ENCODE measurements at regions of chr1 and their contacts with region 1.

Region 1: DNA sequence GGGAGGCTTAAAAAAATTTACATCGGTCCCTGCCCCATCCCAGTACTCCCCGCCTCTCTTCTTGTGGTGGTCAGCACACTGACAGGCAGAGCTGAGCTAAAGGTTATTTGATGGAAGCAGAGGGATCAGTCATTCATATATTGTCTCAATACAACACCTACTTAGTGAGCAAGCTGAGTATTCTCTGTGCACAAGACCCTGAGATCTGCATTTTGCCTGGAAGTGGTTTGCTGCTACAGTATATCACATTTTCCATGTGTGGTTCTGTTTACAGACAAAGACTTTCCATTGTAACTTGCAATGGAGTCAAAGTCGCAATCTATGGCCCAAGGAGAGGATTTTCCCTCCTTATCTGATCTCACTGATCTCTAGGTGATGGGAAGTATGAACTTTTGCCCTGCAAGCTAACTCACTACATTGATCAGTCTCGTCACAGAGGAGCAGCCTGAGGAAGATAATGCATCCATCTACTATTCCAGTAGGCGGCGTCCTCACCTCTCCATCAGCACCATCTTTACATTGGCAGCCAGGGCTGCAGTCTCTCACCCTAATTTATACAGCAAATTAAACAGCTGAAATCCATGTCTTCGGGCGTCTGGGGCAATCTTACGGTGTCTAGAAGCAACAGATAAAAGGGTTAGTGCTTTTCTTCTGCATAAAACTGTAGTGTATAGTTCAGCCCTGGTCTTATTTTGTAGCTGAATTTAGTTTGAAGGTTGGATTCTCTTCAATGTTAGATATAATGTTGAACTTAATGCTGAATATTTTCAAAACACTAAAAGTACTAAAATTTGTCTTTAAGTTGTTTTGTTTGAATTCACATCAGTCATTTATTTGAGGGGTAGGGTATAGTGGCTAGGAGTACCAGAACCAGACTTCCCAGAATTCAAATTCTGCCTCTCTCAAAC is 3.2 kb upstream of the TRAF5 start:
- DNase-seq: peak; percentile 68
- H3K4me3 ChIP-seq: no peak overlapping the region
- H3K27ac ChIP-seq: no peak overlapping the region
- H3K4me1 ChIP-seq: peaks cover 3% of the 10 kb centered on the region
- H3K27me3 ChIP-seq: no peaks in the 10 kb centered on the region
- CTCF ChIP-seq: peak; percentile 79 to 80
- POLR2A ChIP-seq: no peak

Region 2: DNA sequence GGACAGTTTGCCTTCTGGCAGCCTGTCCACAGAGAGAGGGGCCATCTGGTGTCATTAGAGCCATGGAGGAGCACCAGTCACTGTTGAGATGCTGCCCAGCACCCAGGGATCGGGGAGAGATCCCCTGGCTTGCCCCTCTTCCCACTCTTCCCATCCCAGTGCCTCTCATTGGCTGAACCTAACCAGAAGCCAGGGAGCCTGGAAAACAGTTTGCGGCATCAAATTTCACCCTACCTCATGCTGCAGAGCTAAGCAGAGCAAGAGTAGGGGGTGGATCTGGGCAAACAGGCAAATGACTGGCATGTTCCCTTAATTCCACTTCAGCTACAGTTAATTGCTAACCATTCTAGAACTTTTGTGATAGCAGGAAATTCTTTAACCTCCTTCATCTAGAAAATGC is 22.3 kb after region 1 on chr1:
- CTCF ChIA-PET with region 1: interaction called, 14 read pairs
- POLR2A ChIA-PET with region 1: no interaction called
- dilution Hi-C with region 1: no loop called
- intact Hi-C with region 1: no loop called
- DNase-seq: no peak
- H3K4me3 ChIP-seq: no peak overlapping the region
- H3K27ac ChIP-seq: no peak overlapping the region
- H3K4me1 ChIP-seq: no peaks in the 10 kb centered on the region
- H3K27me3 ChIP-seq: no peaks in the 10 kb centered on the region
- CTCF ChIP-seq: no peak
- POLR2A ChIP-seq: no peak

Region 3: GRCh38 chr1:211352985-211353515 is 29.6 kb after region 1 on chr1:
- CTCF ChIA-PET with region 1: interaction called, 14 read pairs
- POLR2A ChIA-PET with region 1: no interaction called
- dilution Hi-C with region 1: no loop called
- intact Hi-C with region 1: loop called (anchors 1 kb)
- DNase-seq: no peak
- H3K4me3 ChIP-seq: no peak overlapping the region
- H3K27ac ChIP-seq: no peak overlapping the region
- H3K4me1 ChIP-seq: no peaks in the 10 kb centered on the region
- H3K27me3 ChIP-seq: no peaks in the 10 kb centered on the region
- CTCF ChIP-seq: peak; percentile 75 to 81
- POLR2A ChIP-seq: no peak

Region 4: DNA sequence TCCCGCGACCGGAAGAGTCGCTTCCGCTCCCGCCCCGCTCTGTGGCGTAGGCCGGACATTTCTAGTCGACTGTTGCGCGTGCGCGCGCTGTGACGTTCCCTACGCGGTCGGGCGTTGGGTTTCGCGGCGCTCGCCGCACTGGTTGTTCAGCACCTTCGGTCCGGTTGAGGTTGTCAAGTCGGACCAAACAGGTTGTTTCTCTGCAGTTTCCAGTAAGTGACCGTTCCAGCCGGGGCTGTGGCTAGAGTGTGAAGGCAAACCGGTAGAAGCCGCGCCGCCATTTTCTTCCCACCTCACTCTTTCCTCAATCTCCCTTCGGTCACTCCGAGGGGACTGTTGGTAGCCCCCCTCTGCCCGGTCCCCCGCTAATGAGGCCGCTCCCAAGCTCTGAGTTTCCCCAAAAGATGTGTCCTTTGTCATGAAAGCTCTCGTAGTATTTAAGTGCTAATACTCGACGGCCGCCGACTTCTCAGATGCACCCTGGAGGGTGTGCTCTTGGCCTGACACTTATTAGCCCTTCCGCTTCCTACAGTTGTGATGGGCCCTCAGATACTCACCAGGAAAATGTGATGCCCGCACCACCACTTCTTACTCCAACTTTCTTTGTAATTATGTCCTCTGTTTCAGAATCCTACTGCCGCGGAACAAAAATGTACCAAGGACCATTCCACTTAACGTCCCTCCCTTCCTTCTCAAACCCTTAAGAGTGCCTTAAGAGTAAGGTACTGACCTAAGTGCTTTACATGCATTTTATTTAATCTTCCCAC is 59.5 kb after region 1 on chr1:
- CTCF ChIA-PET with region 1: interaction called, 4 read pairs
- POLR2A ChIA-PET with region 1: no interaction called
- dilution Hi-C with region 1: no loop called
- intact Hi-C with region 1: loop called (anchors 1 kb)
- DNase-seq: peak; percentile 94
- H3K4me3 ChIP-seq: peak overlapping the region; percentile 50 to 77 (median 56)
- H3K27ac ChIP-seq: peak overlapping the region; percentile 96
- H3K4me1 ChIP-seq: peaks cover 11% of the 10 kb centered on the region
- H3K27me3 ChIP-seq: no peaks in the 10 kb centered on the region
- CTCF ChIP-seq: no peak
- POLR2A ChIP-seq: peak; percentile 98

Region 5: DNA sequence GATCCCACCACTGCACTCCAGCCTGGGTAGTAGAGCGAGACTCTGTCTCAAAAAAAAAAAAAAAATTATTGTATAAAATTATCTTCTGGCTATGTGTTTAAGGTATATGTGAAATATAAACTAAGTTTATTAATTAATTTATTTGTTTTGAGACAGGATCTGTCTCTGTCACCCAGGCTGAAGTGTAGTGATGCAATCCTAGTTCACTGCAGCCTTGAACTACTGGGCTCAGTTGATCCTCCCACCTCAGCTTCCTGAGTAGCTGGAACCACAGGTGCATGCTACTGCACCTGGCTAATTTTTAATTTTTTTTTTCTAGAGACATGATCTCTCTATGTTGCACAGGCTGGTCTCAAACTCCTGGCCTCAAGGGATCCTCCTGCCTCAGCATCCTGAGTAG is 100.6 kb after region 1 on chr1:
- CTCF ChIA-PET with region 1: no interaction called
- POLR2A ChIA-PET with region 1: no interaction called
- dilution Hi-C with region 1: no loop called
- intact Hi-C with region 1: no loop called
- DNase-seq: no peak
- H3K4me3 ChIP-seq: no peak overlapping the region
- H3K27ac ChIP-seq: no peak overlapping the region
- H3K4me1 ChIP-seq: no peaks in the 10 kb centered on the region
- H3K27me3 ChIP-seq: no peaks in the 10 kb centered on the region
- CTCF ChIP-seq: no peak
- POLR2A ChIP-seq: no peak

Region 6: GRCh38 chr1:211469938-211470529 is 146.6 kb after region 1 on chr1:
- CTCF ChIA-PET with region 1: interaction called, 18 read pairs
- POLR2A ChIA-PET with region 1: no interaction called
- dilution Hi-C with region 1: no loop called
- intact Hi-C with region 1: no loop called
- DNase-seq: peak; percentile 80
- H3K4me3 ChIP-seq: no peak overlapping the region
- H3K27ac ChIP-seq: no peak overlapping the region
- H3K4me1 ChIP-seq: peaks cover 20% of the 10 kb centered on the region
- H3K27me3 ChIP-seq: peaks cover 0 to 7% of the 10 kb centered on the region in 2 experiments
- CTCF ChIP-seq: peak; percentile 92 to 96
- POLR2A ChIP-seq: no peak

Region 7: DNA sequence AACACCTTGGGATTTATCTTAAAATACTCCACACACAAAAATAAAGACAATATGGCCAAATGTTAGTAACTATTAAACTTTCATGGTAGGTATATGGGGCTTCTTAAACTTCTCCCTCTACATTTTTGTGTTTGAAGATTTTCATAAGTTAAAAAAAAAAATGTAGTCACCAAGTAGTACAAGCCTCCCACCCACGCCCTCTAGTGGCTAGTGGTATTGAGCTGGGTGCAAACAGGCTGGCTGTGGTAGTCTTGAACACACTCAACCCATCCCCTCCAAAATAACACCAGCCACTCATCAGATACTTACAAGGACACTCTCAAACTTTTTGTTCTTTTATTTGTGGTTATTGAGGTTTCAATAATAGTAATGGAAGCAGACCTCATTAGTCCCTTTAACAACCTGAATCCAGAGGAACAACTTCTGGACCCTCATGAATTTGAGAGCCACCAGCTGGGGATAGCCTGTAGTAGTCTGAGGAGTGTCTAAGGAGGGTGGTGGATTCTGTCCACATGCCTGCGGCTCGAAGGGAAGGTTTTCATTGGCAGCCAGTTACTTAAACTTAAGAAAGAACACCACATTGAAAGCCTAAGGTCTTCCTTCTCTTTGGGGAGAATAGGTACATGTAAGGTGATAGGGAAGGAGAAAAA is 152.9 kb after region 1 on chr1:
- CTCF ChIA-PET with region 1: interaction called, 52 read pairs
- POLR2A ChIA-PET with region 1: no interaction called
- dilution Hi-C with region 1: no loop called
- intact Hi-C with region 1: loop called (anchors 1 kb)
- DNase-seq: peak; percentile 69
- H3K4me3 ChIP-seq: no peak overlapping the region
- H3K27ac ChIP-seq: no peak overlapping the region
- H3K4me1 ChIP-seq: no peaks in the 10 kb centered on the region
- H3K27me3 ChIP-seq: peaks cover 19 to 38% of the 10 kb centered on the region in 2 experiments
- CTCF ChIP-seq: peak; percentile 87 to 88
- POLR2A ChIP-seq: no peak

Measured in endothelial cell of umbilical vein (primary cell).